Activated CD4-positive, alpha-beta T cell treated with anti-CD3 and anti-CD28 coated beads for 36 hours (primary cell): ENCODE measurements at regions of chr15 and their contacts with region 1.

Region 1: DNA sequence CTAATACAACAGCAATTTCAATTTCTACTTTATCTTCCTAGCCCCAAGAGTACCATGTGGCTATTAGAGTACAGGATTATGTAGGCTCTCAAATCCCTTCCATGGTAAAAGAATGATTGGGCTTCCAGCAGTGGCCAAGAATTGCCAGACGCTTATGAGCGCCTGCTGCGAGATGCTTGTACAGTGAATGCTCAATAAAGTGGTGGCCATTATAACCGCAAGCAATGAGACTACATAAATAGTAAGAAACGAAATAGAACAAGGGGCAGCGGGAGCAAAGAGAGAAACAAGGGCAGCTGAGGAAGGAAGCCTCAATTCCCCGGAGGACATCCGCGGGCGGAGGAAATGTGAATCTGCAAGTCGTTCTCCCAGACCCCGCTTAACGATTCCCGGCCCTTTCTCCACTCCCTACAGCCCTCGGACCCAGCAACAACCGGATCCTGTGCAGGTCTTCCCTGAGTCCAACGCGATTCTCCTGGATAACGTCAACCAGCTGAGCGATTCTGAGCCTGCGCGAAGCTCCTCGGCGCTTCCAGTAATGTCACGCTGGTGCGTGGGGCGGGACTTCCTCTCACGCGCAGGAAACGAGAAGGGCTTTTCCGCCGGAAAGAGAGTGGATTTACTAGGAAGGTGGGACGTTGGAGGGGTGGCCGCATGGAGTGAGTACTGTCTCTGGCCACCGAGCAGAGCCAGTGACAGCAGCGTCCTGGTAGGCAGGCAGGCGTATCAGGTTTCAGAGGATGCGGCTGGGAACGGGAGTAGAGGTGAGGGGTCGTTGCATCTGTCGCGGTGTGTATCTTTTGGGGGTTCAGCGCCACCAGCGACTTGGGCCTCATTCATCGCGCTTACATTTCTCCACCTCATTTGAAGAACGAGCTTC is 40.5 kb upstream of the AP3B2 start:
- DNase-seq: peak; percentile 91
- ATAC-seq: peak; percentile 95
- H3K4me3 Mint-ChIP-seq: peak overlapping the region; percentile 86
- H3K27ac Mint-ChIP-seq: peak overlapping the region; percentile 98
- H3K4me1 Mint-ChIP-seq: peaks cover 44% of the 10 kb centered on the region
- H3K27me3 Mint-ChIP-seq: no peaks in the 10 kb centered on the region

Region 2: DNA sequence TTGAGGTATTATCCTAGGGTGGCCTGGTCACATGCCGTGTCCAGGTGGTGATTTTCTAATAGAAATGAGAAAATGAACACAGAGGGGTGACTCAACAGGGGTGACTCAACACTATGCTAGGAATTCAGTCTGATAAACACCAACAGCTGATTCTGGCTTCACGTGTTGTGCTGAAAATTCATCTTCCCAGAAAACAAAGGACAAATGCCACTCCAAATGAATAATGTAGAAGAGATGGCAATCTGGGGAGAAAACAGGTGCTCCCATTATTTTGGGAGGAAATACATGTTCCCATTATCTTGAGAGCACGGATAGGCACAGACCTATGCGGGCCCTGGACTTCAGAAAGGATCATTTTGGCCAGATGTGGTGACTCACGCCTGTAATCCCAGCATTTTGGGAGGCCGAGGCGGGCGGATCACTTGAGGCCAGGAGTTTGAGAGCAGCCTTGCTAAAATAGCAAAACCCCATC is 603.2 kb before region 1 on chr15:
- CTCF ChIA-PET with region 1: no interaction called
- POLR2A ChIA-PET with region 1: no interaction called
- intact Hi-C with region 1: no loop called
- DNase-seq: no peak
- ATAC-seq: no peak
- H3K4me3 Mint-ChIP-seq: no peak overlapping the region
- H3K27ac Mint-ChIP-seq: no peak overlapping the region
- H3K4me1 Mint-ChIP-seq: no peaks in the 10 kb centered on the region
- H3K27me3 Mint-ChIP-seq: no peaks in the 10 kb centered on the region

Region 3: GRCh38 chr15:82680200-82681102 is 69.7 kb before region 1 on chr15:
- CTCF ChIA-PET with region 1: interaction called, 3 read pairs
- POLR2A ChIA-PET with region 1: no interaction called
- intact Hi-C with region 1: loop called in 1 of 2 experiments (anchors 1 kb)
- DNase-seq: peak; percentile 90
- ATAC-seq: peak; percentile 96
- H3K4me3 Mint-ChIP-seq: peak overlapping the region; percentile 80
- H3K27ac Mint-ChIP-seq: peak overlapping the region; percentile 85
- H3K4me1 Mint-ChIP-seq: peaks cover 10% of the 10 kb centered on the region
- H3K27me3 Mint-ChIP-seq: peaks cover 7% of the 10 kb centered on the region

Region 4: DNA sequence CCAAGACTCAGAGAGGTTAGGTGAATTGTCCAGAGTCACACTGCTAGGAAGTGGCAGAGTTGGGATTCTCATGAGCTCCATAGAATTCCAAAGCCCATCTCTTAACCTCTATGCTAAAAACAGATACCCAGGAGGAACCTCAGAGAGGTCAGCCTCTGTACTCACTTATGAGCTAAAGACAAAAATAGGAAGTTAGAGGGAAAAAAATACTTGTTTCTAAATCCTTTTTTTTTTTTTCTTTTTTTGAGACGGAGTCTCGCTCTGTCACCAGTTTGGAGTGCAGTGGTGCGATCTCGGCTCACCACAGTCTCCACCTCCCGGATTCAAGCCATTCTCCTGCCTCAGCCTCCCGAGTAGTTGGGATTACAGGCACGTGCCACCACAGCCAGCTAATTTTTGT is 24.3 kb after region 1 on chr15:
- CTCF ChIA-PET with region 1: no interaction called
- POLR2A ChIA-PET with region 1: no interaction called
- intact Hi-C with region 1: no loop called
- DNase-seq: no peak
- ATAC-seq: no peak
- H3K4me3 Mint-ChIP-seq: no peak overlapping the region
- H3K27ac Mint-ChIP-seq: no peak overlapping the region
- H3K4me1 Mint-ChIP-seq: no peaks in the 10 kb centered on the region
- H3K27me3 Mint-ChIP-seq: no peaks in the 10 kb centered on the region

Region 5: GRCh38 chr15:82832601-82833361 is 82.6 kb after region 1 on chr15:
- CTCF ChIA-PET with region 1: interaction called, 3 read pairs
- POLR2A ChIA-PET with region 1: no interaction called
- intact Hi-C with region 1: loop called in 1 of 2 experiments (anchors 2 kb)
- DNase-seq: peak; percentile 72
- ATAC-seq: peak; percentile 92
- H3K4me3 Mint-ChIP-seq: no peak overlapping the region
- H3K27ac Mint-ChIP-seq: peak overlapping the region; percentile 7
- H3K4me1 Mint-ChIP-seq: peaks cover 34% of the 10 kb centered on the region
- H3K27me3 Mint-ChIP-seq: no peaks in the 10 kb centered on the region